Gastrocnemius medialis (tissue), 4 donors: ENCODE measurements at regions of chr22 and their contacts with region 1.

Region 1: GRCh38 chr22:31211862-31212730 is at the start of gene LIMK2:
- DNase-seq: peak; percentile 87 to 92
- ATAC-seq: peak; percentile 81 to 87
- H3K4me3 ChIP-seq: peak within 1 kb of the TSS; percentile 72 to 91 (median 85)
- H3K27ac ChIP-seq: peak within 1 kb of the TSS; percentile 85 to 88 (median 87)
- H3K4me1 ChIP-seq: peaks cover 20 to 24% of the 10 kb centered on the region in 2 donors
- H3K27me3 ChIP-seq: no peaks in the 10 kb centered on the region
- CTCF ChIP-seq: peak; percentile 69 to 92 (median 75)
- POLR2A ChIP-seq: peak; percentile 80 to 84
- total RNA-seq, gene LIMK2: 4.0 to 12.6 (median 7.1) TPM

Region 2: GRCh38 chr22:30968924-30969539 is 243.1 kb before region 1 on chr22 and contains the start of gene TUG1:
- in situ Hi-C with region 1: no loop called
- intact Hi-C with region 1: loop called (anchors 5 kb)
- DNase-seq: peak; percentile 99
- ATAC-seq: peak; percentile 91 to 94
- H3K4me3 ChIP-seq: peak within 1 kb of the TSS; percentile 61 to 95 (median 88)
- H3K27ac ChIP-seq: peak within 1 kb of the TSS; percentile 89 to 98 (median 98)
- H3K4me1 ChIP-seq: peaks cover 67 to 69% of the 10 kb centered on the region in 2 donors
- H3K27me3 ChIP-seq: no peaks in the 10 kb centered on the region
- CTCF ChIP-seq: peak in 2 of 5 experiments; percentile 32 to 33
- POLR2A ChIP-seq: peak; percentile 93 to 97
- total RNA-seq, gene TUG1: 14.3 to 23.9 (median 15.8) TPM

Region 3: DNA sequence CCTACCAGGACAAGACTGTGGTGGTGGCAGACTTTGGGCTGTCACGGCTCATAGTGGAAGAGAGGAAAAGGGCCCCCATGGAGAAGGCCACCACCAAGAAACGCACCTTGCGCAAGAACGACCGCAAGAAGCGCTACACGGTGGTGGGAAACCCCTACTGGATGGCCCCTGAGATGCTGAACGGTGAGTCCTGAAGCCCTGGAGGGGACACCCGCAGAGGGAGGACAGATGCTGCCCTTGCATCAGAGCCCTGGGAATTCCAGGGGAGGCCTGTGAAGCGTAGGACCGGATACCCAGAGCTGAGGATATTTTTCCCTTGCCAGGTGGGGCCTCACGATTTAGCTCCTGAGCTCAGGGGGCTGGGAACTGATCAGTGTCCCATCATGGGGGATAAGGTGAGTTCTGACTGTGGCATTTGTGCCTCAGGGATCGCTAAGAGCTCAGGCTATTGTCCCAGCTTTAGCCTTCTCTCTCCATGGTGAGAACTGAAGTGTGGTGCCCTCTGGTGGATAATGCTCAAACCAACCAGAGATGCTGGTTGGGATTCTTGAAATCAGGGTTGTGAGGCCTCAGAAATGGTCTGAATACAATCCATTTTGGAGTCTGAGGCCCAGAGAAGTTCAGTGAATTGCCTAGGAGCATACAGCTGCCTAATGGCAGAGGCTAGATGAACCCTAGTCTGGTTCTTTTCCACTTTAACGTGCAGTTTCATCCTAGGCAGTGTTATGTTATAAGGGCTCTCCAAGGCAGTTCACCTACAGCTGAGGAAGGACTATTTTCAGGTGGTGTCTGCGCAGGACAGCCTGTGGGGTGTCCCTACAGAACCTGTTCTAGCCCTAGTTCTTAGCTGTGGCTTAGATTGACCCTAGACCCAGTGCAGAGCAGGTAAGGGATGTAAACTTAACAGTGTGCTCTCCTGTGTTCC is 60.7 kb after region 1 on chr22:
- in situ Hi-C with region 1: loop called in 1 of 4 experiments (anchors 5 kb)
- intact Hi-C with region 1: loop called (anchors 2 kb)
- DNase-seq: peak; percentile 29 to 43
- ATAC-seq: peak; percentile 73 to 94
- H3K4me3 ChIP-seq: no peak overlapping the region
- H3K27ac ChIP-seq: no peak overlapping the region
- H3K4me1 ChIP-seq: no peaks in the 10 kb centered on the region
- H3K27me3 ChIP-seq: no peaks in the 10 kb centered on the region
- CTCF ChIP-seq: peak; percentile 26 to 79 (median 70)
- POLR2A ChIP-seq: no peak